ENCODE measurements at regions of chrX and their contacts with region 1.

Region 1: GRCh38 chrX:41824551-41824950 is 98.8 kb downstream of the CASK start:
- DNase-seq: no peak
- H3K4me3 ChIP-seq: no peak overlapping the region
- H3K27ac ChIP-seq: no peak overlapping the region
- H3K4me1 ChIP-seq: no peaks in the 10 kb centered on the region
- H3K27me3 ChIP-seq: no peaks in the 10 kb centered on the region
- CTCF ChIP-seq: no peak
- POLR2A ChIP-seq: no peak

Region 2: GRCh38 chrX:41923257-41923969 is 98.9 kb after region 1 on chrX and contains the start of gene CASK:
- intact Hi-C with region 1: loop called (anchors 5 kb)
- DNase-seq: peak; percentile 87 to 89
- H3K4me3 ChIP-seq: peak within 1 kb of the TSS; percentile 57 to 77 (median 64)
- H3K27ac ChIP-seq: peak within 1 kb of the TSS; percentile 81 to 93
- H3K4me1 ChIP-seq: no peaks in the 10 kb centered on the region
- H3K27me3 ChIP-seq: peaks cover 0 to 32% of the 10 kb centered on the region in 2 donors
- CTCF ChIP-seq: no peak
- POLR2A ChIP-seq: no peak
- total RNA-seq, gene CASK: 34.4 to 103 (median 52.4) TPM

Region 3: DNA sequence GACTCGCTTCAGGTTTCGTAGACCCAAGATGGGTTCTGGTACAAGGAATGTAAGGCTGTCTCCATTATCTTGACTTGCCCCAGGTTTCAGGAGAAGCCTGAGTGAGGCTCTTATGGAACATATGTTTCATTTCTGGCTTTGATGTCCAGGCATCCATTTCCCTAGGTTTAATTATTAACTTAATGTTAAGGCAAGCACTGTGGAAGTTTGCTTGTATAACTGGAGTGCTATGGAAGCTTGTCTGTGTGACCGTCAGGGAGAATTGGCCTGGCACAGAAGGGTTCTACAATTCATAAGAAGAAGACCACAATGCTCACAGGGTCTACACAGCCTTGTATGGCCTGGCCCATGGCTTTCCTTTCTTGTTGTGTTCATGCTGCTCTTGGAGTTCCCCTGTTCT is 1000.6 kb after region 1 on chrX:
- intact Hi-C with region 1: loop called (anchors 5 kb)
- DNase-seq: no peak
- H3K4me3 ChIP-seq: no peak overlapping the region
- H3K27ac ChIP-seq: no peak overlapping the region
- H3K4me1 ChIP-seq: no peaks in the 10 kb centered on the region
- H3K27me3 ChIP-seq: no peaks in the 10 kb centered on the region
- CTCF ChIP-seq: no peak
- POLR2A ChIP-seq: no peak